Activated B cell treated with CpG ODN at 0.5 μM for 24 hours (primary cell): ENCODE measurements at regions of chr1 and their contacts with region 1.

Region 1: GRCh38 chr1:178619042-178619927 is 105.8 kb upstream of the RALGPS2 start:
- DNase-seq: no peak
- ATAC-seq: peak; percentile 98
- H3K4me3 Mint-ChIP-seq: peak overlapping the region; percentile 67
- H3K27ac Mint-ChIP-seq: peak overlapping the region; percentile 91
- H3K4me1 Mint-ChIP-seq: peaks cover 58% of the 10 kb centered on the region
- H3K27me3 Mint-ChIP-seq: no peaks in the 10 kb centered on the region
- CTCF ChIP-seq: no peak

Region 2: DNA sequence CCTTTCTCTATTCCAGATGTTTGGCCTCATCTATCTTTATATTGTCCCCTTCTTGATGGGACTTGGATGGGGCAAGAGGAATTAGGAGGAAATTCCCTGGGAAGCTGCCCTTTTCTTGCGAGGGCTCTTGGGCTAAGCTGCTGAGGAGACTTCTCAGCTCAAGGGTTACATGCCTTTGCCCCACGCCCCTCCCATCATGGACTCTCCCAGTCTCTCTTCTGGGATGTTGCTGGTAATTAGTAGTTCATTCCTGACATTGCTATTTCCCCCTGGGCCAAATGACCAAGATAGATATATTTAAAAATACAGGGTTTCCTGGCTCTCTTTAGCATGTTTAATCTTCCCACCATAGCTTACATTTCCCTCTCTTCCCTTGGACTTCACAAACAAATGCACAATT is 15.2 kb after region 1 on chr1:
- CTCF ChIA-PET with region 1: no interaction called
- POLR2A ChIA-PET with region 1: interaction called, 12 read pairs
- intact Hi-C with region 1: loop called (anchors 2 kb)
- DNase-seq: no peak
- ATAC-seq: no peak
- H3K4me3 Mint-ChIP-seq: no peak overlapping the region
- H3K27ac Mint-ChIP-seq: no peak overlapping the region
- H3K4me1 Mint-ChIP-seq: peaks cover 53% of the 10 kb centered on the region
- H3K27me3 Mint-ChIP-seq: no peaks in the 10 kb centered on the region
- CTCF ChIP-seq: no peak

Region 3: GRCh38 chr1:178802873-178803272 is 183.6 kb after region 1 on chr1:
- CTCF ChIA-PET with region 1: no interaction called
- POLR2A ChIA-PET with region 1: no interaction called
- intact Hi-C with region 1: no loop called
- DNase-seq: no peak
- ATAC-seq: no peak
- H3K4me3 Mint-ChIP-seq: no peak overlapping the region
- H3K27ac Mint-ChIP-seq: peak overlapping the region; percentile 46
- H3K4me1 Mint-ChIP-seq: peaks cover 45% of the 10 kb centered on the region
- H3K27me3 Mint-ChIP-seq: no peaks in the 10 kb centered on the region
- CTCF ChIP-seq: no peak